PC-9 (cell line): ENCODE measurements at regions of chr6 and their contacts with region 1.

Region 1: GRCh38 chr6:156686995-156687788 is 90.0 kb upstream of the ARID1B start:
- DNase-seq: peak; percentile 43 to 82
- H3K4me3 ChIP-seq: peak overlapping the region; percentile 82
- H3K27ac ChIP-seq: peak overlapping the region; percentile 86
- H3K4me1 ChIP-seq: peaks cover 16% of the 10 kb centered on the region
- H3K27me3 ChIP-seq: no peaks in the 10 kb centered on the region
- CTCF ChIP-seq: no peak

Region 2: DNA sequence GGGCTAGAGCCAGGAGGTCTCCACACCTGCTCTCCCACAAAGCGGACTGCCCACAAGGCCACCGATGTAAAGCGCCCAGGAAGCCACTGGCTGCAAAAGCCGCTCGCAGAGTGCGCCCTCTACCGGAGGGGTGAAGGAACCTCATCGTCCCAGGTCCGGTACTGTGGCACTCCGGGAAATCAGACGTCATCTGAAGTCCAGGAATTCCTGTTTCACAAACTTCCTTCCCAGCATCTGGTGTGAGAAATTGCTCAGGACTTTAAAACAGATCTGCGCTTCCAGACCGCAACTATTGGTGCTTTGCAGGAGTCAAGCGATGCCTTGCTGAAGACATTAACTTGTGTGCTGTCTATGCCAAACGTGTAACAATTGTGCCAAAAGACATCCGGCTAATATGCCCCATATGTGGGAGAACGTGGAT is 25.2 kb before region 1 on chr6:
- CTCF ChIA-PET with region 1: no interaction called
- POLR2A ChIA-PET with region 1: no interaction called
- intact Hi-C with region 1: no loop called
- DNase-seq: peak in 1 of 2 experiments; percentile 34
- H3K4me3 ChIP-seq: no peak overlapping the region
- H3K27ac ChIP-seq: no peak overlapping the region
- H3K4me1 ChIP-seq: no peaks in the 10 kb centered on the region
- H3K27me3 ChIP-seq: no peaks in the 10 kb centered on the region; the same call in 1 of the 2 replicates
- CTCF ChIP-seq: peak; percentile 70

Region 3: GRCh38 chr6:156719720-156720563 is 32.8 kb after region 1 on chr6:
- CTCF ChIA-PET with region 1: no interaction called
- POLR2A ChIA-PET with region 1: no interaction called
- intact Hi-C with region 1: loop called (anchors 5 kb)
- DNase-seq: peak; percentile 83 to 87
- H3K4me3 ChIP-seq: peak overlapping the region; percentile 50; the same call in 1 of the 2 replicates
- H3K27ac ChIP-seq: peak overlapping the region; percentile 68
- H3K4me1 ChIP-seq: peaks cover 28% of the 10 kb centered on the region
- H3K27me3 ChIP-seq: no peaks in the 10 kb centered on the region
- CTCF ChIP-seq: no peak